ENCODE measurements at regions of chr1 and their contacts with region 1.

Region 1: GRCh38 chr1:230261928-230262650 is 164.0 kb downstream of the PGBD5 start:
- DNase-seq: no peak
- ATAC-seq: no peak
- H3K4me3 ChIP-seq: no peak overlapping the region
- H3K27ac ChIP-seq: no peak overlapping the region
- H3K4me1 ChIP-seq: no peaks in the 10 kb centered on the region
- H3K27me3 ChIP-seq: no peaks in the 10 kb centered on the region
- CTCF ChIP-seq: no peak

Region 2: DNA sequence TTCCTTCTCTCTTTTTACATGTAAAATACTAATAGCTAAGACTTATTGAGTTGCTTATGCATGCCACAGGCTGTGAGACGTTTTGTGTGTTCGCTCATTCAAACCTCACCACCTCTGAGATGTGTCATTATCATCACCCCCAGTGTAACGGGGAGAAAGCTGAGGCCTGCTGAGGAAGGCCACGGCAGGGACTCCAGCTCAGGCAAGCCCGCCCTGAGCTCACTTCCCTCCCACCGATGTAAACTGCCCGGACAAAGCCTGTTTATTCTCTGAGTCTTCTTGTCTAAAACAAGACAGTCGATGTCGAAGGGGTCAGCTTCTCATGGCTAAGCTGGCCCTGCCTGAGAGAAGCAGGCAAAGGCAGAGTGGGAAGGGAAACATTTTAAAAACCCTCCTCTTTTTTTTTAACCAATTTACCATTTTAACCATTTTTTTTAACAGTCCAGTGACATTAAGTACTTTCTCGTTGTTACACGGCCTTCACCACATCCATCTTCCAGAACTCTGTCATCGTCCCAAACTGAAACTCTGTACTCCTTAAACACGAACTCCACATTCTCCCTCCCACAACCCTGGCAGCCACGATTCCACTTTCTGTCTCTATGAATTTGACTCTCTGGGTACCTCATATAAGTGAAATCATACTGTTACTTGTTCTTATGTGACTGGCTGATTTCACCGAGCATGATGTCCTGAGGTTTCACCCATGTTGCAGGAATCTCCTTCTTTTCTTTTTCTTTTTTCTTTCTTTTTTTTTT is 399.9 kb before region 1 on chr1:
- CTCF ChIA-PET with region 1: no interaction called
- POLR2A ChIA-PET with region 1: interaction called, 11 read pairs
- in situ Hi-C with region 1: no loop called
- intact Hi-C with region 1: no loop called
- DNase-seq: no peak
- ATAC-seq: no peak
- H3K4me3 ChIP-seq: no peak overlapping the region
- H3K27ac ChIP-seq: no peak overlapping the region
- H3K4me1 ChIP-seq: no peaks in the 10 kb centered on the region
- H3K27me3 ChIP-seq: no peaks in the 10 kb centered on the region; the same call in 1 of the 2 replicates
- CTCF ChIP-seq: no peak